Colonic mucosa (tissue), 4 donors: ENCODE measurements at regions of chr1 and their contacts with region 1.

Region 1: GRCh38 chr1:165592945-165593823 is 37.9 kb upstream of the MGST3 start:
- DNase-seq: peak; percentile 78
- H3K4me3 ChIP-seq: no peak overlapping the region
- H3K27ac ChIP-seq: no peak overlapping the region
- H3K4me1 ChIP-seq: no peaks in the 10 kb centered on the region
- H3K27me3 ChIP-seq: peaks cover 15% of the 10 kb centered on the region
- CTCF ChIP-seq: peak; percentile 94

Region 2: DNA sequence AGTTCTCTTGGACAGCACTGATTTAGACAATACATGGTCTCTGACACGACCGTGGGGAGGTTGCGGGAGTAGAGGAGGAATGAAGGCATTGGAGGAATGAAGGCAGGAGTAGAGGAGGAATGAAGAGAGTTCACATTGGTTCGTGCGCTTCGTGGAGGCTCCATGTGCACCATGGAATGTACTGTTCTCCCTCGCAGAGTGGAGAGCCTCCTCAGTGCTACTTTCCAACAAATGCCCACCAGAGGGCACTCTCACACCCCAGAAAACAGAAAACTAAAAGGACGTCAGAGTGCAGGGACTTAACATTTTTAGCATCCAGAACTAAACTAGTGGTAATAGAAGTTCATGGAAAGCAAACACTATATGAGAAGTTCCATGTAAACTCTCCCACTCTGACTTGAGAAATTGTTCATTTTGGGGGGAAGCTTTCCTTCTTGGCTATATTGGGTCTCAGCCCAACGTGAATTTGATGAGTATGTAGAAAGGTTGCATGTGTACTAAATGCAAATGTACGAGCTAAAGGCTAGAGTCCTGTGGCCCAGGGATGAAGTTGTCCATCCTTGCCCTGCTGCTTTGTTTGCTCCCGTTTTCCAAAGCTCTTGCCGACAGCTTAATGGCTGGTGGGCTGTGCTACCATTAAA is 448.3 kb before region 1 on chr1:
- intact Hi-C with region 1: loop called (anchors 5 kb)
- DNase-seq: peak; percentile 49
- H3K4me3 ChIP-seq: no peak overlapping the region
- H3K27ac ChIP-seq: no peak overlapping the region
- H3K4me1 ChIP-seq: no peaks in the 10 kb centered on the region
- H3K27me3 ChIP-seq: no peaks in the 10 kb centered on the region
- CTCF ChIP-seq: peak; percentile 63

Region 3: DNA sequence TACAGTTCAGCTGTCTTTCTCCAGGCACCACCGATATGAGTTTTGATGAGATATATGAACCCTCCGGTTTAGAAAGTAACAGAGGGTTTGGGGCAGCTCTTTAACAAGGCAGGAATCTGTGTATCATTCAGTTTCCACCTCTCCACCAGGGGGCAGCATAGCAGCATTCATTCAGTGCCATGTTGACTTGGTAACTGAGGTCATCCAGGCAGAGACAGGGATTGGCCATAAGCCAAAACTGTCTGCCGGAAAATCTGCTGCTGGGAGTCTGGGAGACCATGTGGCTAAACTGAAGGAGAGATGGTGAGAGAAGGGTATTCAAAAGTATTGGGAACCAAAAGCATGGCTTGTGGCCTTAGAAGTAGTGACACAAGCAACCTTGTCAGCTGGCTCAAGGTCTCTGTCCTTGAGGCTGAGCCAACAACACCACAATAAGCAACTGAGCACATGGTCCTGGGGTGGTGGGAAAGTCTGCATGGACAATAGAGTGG is 335.2 kb before region 1 on chr1:
- intact Hi-C with region 1: loop called (anchors 5 kb)
- DNase-seq: peak; percentile 90
- H3K4me3 ChIP-seq: no peak overlapping the region
- H3K27ac ChIP-seq: no peak overlapping the region
- H3K4me1 ChIP-seq: no peaks in the 10 kb centered on the region
- H3K27me3 ChIP-seq: no peaks in the 10 kb centered on the region
- CTCF ChIP-seq: peak; percentile 66

Region 4: GRCh38 chr1:165392634-165393571 is 200.3 kb before region 1 on chr1:
- intact Hi-C with region 1: loop called (anchors 2 kb)
- DNase-seq: peak; percentile 76
- H3K4me3 ChIP-seq: no peak overlapping the region
- H3K27ac ChIP-seq: no peak overlapping the region
- H3K4me1 ChIP-seq: no peaks in the 10 kb centered on the region
- H3K27me3 ChIP-seq: no peaks in the 10 kb centered on the region
- CTCF ChIP-seq: peak; percentile 95

Region 5: GRCh38 chr1:165768513-165769394 is 175.6 kb after region 1 on chr1 and contains the start of gene TMCO1:
- intact Hi-C with region 1: no loop called
- DNase-seq: peak; percentile 98
- H3K4me3 ChIP-seq: peak within 1 kb of the TSS; percentile 69
- H3K27ac ChIP-seq: peak within 1 kb of the TSS; percentile 88
- H3K4me1 ChIP-seq: peaks cover 3% of the 10 kb centered on the region
- H3K27me3 ChIP-seq: no peaks in the 10 kb centered on the region
- CTCF ChIP-seq: no peak
- total RNA-seq, gene TMCO1: 149 to 173 TPM